Lower leg skin (tissue), 4 donors: ENCODE measurements at regions of chrX and their contacts with region 1.

Region 1: DNA sequence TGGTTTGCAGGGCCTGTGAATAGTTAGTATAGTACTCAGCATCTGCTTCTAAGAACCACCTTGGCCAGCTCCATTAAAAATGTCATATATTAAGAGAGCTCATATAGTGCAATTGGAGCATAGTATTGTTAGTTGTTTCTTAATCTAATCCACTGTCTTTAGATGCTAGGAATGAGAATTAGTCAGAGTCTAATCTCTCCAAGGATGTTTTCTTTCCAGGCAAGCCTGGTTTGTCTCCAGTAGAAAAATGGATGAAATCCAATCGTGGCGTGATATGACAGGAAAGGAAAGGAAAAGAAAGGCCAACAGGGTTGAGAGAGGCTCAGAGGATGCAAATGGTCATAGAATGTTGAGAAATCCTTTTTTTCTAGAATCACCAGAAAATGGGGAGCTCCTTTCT is 15.0 kb upstream of the TMEM164 start:
- DNase-seq: no peak
- H3K4me3 ChIP-seq: no peak overlapping the region
- CTCF ChIP-seq: no peak
- POLR2A ChIP-seq: no peak

Region 2: DNA sequence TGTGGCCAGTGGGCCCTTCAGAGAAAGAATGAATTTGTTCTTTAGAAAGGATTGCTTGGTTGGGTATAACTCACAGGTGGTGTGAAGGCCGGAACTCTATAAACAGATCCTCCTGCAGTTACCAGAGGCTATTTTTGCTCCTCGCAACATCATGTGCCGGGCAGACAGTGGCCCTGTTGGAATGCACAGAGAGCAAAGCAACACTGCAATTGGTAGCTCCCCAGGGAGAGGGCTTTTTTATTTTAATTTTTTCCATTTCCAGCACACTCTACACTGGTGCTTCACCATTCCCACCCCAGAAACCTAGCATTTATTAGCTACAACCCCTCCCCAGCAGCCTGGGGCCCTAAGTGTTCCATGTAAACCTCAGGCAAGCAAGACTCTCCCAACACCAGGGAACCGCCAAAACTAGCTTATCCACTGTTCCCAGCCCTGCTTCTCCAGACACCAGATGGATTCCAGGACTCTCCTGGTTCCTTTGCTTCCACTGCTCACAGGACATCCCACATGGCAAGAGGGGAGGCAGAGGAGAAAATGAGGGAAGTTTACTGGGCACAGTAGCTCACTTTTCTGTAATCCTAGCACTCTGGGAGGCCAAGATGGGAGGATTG is 60.1 kb before region 1 on chrX:
- intact Hi-C with region 1: loop called (anchors 10 kb)
- DNase-seq: no peak
- H3K4me3 ChIP-seq: no peak overlapping the region
- CTCF ChIP-seq: no peak
- POLR2A ChIP-seq: no peak